Sciatic nerve (tissue), 2 donors: ENCODE measurements at regions of chr4 and their contacts with region 1.

Region 1: DNA sequence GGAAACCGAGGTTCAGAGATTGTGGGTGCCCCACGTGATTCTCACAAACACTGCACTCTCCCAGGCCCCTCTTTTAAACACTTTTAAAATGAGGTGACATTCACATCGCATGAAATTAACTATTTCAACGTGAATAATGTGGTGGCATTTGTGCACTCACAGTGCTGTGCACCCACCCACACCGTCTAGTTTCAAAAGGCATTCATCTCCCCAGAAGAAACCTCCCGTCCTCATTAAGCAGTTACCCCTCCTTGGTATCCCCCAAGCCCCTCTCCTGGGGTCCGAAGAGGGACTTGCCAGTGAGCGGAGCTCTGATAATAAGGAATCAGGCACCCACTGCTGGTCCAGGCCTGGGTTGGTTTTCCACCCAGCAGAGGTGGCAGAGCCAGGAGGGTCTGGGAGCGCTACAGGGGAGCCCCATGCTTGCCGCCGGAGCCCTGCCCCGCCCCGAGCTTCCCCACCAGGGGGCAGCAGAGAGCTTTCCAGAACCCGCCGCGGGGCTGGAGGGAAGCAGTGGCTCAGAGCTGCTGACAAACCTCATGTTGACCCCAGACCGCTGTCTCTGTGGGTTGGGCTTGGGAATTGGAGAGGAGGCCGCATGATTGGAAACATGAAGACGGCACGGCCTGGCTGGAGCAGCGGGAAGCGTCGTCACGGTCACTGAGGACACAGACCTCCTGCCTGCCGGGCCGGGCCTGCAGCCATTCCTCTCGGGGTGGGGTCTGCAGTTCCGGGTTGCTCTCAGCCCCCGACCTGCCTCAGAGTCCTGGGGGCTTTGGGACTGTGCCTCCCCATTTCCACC is 27.5 kb upstream of the HTRA3 start:
- DNase-seq: peak; percentile 96
- ATAC-seq: peak; percentile 93

Region 2: GRCh38 chr4:6633041-6633906 is 1608.8 kb before region 1 on chr4:
- intact Hi-C with region 1: loop called (anchors 5 kb)
- DNase-seq: no peak
- ATAC-seq: no peak

Region 3: DNA sequence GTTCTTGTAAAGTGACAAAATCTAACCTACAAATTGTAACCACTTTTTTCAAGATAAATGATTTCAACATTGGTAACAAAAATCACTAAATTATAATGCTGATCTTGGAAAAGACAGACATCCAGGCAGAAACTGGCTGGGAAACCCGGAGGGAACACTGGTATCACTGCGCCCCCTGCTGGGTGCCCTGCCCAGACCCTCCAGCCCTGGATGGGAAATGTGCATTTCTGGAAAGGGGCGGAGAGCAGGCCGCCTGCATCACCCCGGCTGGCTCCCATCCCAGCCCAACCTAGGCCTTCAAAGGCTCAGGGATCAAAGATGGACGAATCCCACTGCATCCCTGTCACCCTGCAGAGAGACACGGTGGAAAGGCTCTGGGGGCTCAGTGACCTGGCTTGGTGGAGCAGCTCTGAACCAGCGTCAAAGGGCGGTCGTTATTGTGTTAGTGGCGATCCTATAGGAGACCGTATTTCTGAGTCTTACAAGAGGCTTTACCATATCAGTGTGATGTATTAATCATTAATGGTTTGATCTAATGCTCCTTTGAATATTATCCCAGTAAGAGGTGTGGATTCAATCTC is 161.2 kb after region 1 on chr4:
- intact Hi-C with region 1: loop called (anchors 2 kb)
- DNase-seq: peak; percentile 95
- ATAC-seq: peak; percentile 90